Caco-2 (cell line): ENCODE measurements at regions of chr2 and their contacts with region 1.

Region 1: DNA sequence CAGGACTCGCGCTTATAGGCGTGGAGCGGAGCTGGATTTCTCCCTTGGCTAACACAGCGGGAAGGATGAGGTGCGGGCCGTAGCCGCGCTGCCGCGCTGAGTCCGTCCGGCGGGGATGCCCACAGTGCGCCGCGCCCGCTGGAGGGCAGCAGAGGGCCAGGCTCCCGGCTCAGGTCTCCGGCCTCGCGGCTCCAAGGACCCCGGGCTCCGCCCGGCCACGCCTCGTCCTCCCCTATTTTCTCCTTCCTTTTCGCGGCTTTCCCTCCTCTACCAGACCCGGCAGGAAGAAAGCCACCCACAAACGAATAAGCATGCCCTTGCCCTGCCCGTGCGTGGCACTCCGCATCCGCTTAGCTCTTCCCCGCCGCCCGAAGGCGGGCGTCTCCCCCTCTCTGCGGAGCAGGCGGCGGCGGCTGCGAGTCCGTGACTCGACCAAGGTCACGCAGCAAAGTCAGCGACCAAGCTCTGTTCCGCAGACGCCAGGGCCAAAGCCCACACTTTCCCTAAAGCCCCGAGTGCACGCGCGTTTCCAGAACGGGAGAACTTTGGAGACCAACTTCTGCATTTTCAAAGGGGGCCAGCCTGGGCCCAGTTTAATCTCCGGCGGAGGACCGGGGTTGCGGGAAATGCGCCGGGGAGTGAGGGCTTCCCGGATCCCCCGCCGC is 48.6 kb downstream of the KCNIP3 start:
- DNase-seq: peak; percentile 74 to 89
- H3K4me3 ChIP-seq: peak overlapping the region; percentile 35
- H3K4me3 Mint-ChIP-seq: peak overlapping the region; percentile 80
- H3K27ac Mint-ChIP-seq: no peak overlapping the region
- H3K4me1 ChIP-seq: peaks cover 3% of the 10 kb centered on the region; the same call in 1 of the 2 replicates
- H3K4me1 Mint-ChIP-seq: no peaks in the 10 kb centered on the region
- H3K27me3 ChIP-seq: no peaks in the 10 kb centered on the region; the same call in none of the 2 replicates
- H3K27me3 Mint-ChIP-seq: peaks cover 23% of the 10 kb centered on the region
- CTCF ChIP-seq: peak; percentile 89 to 90

Region 2: DNA sequence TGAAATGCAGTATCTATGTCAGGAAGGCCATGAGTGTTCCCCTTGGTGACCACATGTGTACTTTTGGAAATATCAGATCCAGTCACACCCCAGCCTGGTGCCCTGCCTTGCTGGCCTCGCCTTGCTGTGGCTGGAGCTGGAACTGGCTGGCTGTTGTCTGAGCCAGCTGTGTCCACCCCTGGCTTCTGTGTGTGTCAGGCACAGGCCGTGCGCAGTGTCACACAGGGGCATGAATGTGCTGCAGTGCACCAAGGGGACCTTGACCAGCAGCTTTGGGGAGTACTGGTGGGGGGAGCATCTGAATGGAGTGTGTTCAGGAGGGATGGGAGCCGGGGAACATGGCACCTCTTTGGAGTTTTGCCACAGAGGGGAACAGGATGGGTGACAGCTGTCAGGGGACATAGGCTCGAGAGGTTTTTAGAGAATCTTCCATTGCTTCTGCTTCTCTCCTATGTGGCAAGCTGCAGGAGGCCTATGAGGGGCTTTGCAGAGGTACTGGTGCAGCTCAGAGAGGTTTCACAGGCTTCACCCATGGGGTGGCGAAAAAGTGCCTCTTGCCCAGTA is 12.1 kb after region 1 on chr2:
- CTCF ChIA-PET with region 1: no interaction called
- POLR2A ChIA-PET with region 1: no interaction called
- intact Hi-C with region 1: loop called (anchors 1 kb)
- DNase-seq: no peak
- H3K4me3 ChIP-seq: no peak overlapping the region
- H3K4me3 Mint-ChIP-seq: no peak overlapping the region
- H3K27ac Mint-ChIP-seq: no peak overlapping the region
- H3K4me1 ChIP-seq: no peaks in the 10 kb centered on the region
- H3K4me1 Mint-ChIP-seq: no peaks in the 10 kb centered on the region
- H3K27me3 ChIP-seq: no peaks in the 10 kb centered on the region
- H3K27me3 Mint-ChIP-seq: peaks cover 10% of the 10 kb centered on the region
- CTCF ChIP-seq: no peak

Region 3: GRCh38 chr2:95402370-95403203 is 56.9 kb after region 1 on chr2 and contains the start of gene FAHD2A:
- CTCF ChIA-PET with region 1: interaction called, 8 read pairs
- POLR2A ChIA-PET with region 1: no interaction called
- intact Hi-C with region 1: loop called (anchors 1 kb)
- DNase-seq: peak; percentile 95 to 97
- H3K4me3 ChIP-seq: peak within 1 kb of the TSS; percentile 89
- H3K4me3 Mint-ChIP-seq: peak within 1 kb of the TSS; percentile 99
- H3K27ac Mint-ChIP-seq: peak within 1 kb of the TSS; percentile 98
- H3K4me1 ChIP-seq: peaks cover 7% of the 10 kb centered on the region; the same call in 1 of the 2 replicates
- H3K4me1 Mint-ChIP-seq: peaks cover 7% of the 10 kb centered on the region
- H3K27me3 ChIP-seq: no peaks in the 10 kb centered on the region
- H3K27me3 Mint-ChIP-seq: no peaks in the 10 kb centered on the region
- CTCF ChIP-seq: no peak
- total RNA-seq, gene FAHD2A: 23.8 and 26.8 TPM in 2 replicates

Region 4: GRCh38 chr2:95728878-95729596 is 383.3 kb after region 1 on chr2:
- CTCF ChIA-PET with region 1: no interaction called
- POLR2A ChIA-PET with region 1: no interaction called
- intact Hi-C with region 1: loop called (anchors 2 kb)
- DNase-seq: peak; percentile 73 to 76
- H3K4me3 ChIP-seq: no peak overlapping the region
- H3K4me3 Mint-ChIP-seq: no peak overlapping the region
- H3K27ac Mint-ChIP-seq: no peak overlapping the region
- H3K4me1 ChIP-seq: no peaks in the 10 kb centered on the region
- H3K4me1 Mint-ChIP-seq: peaks cover 6% of the 10 kb centered on the region
- H3K27me3 ChIP-seq: no peaks in the 10 kb centered on the region
- H3K27me3 Mint-ChIP-seq: peaks cover 8% of the 10 kb centered on the region
- CTCF ChIP-seq: peak; percentile 62 to 67